H1 (cell line): ENCODE measurements at regions of chr9 and their contacts with region 1.

Region 1: GRCh38 chr9:133715866-133716563 is 22.1 kb downstream of the SARDH start:
- DNase-seq: peak in 1 of 2 experiments; percentile 80
- H3K4me3 ChIP-seq: no peak overlapping the region
- H3K27ac ChIP-seq: no peak overlapping the region
- H3K4me1 ChIP-seq: peaks cover 0 to 9% (median 3%) of the 10 kb centered on the region in 4 experiments; a peak in 3 of 7 replicates
- H3K27me3 ChIP-seq: no peaks in the 10 kb centered on the region
- CTCF ChIP-seq: peak in 2 of 3 experiments; percentile 73 to 86; a peak in 2 of 4 replicates
- EP300 ChIP-seq: no peak
- POLR2A ChIP-seq: no peak
- RAD21 ChIP-seq: peak; percentile 84 to 87

Region 2: GRCh38 chr9:133581513-133582343 is 134.3 kb before region 1 on chr9:
- CTCF ChIA-PET with region 1: interaction called, 12 read pairs
- POLR2A ChIA-PET with region 1: no interaction called
- DNase-seq: no peak
- H3K4me3 ChIP-seq: no peak overlapping the region
- H3K27ac ChIP-seq: no peak overlapping the region
- H3K4me1 ChIP-seq: peaks cover 3 to 26% (median 21%) of the 10 kb centered on the region in 4 experiments
- H3K27me3 ChIP-seq: no peaks in the 10 kb centered on the region
- CTCF ChIP-seq: no peak
- EP300 ChIP-seq: no peak
- POLR2A ChIP-seq: no peak
- RAD21 ChIP-seq: no peak

Region 3: DNA sequence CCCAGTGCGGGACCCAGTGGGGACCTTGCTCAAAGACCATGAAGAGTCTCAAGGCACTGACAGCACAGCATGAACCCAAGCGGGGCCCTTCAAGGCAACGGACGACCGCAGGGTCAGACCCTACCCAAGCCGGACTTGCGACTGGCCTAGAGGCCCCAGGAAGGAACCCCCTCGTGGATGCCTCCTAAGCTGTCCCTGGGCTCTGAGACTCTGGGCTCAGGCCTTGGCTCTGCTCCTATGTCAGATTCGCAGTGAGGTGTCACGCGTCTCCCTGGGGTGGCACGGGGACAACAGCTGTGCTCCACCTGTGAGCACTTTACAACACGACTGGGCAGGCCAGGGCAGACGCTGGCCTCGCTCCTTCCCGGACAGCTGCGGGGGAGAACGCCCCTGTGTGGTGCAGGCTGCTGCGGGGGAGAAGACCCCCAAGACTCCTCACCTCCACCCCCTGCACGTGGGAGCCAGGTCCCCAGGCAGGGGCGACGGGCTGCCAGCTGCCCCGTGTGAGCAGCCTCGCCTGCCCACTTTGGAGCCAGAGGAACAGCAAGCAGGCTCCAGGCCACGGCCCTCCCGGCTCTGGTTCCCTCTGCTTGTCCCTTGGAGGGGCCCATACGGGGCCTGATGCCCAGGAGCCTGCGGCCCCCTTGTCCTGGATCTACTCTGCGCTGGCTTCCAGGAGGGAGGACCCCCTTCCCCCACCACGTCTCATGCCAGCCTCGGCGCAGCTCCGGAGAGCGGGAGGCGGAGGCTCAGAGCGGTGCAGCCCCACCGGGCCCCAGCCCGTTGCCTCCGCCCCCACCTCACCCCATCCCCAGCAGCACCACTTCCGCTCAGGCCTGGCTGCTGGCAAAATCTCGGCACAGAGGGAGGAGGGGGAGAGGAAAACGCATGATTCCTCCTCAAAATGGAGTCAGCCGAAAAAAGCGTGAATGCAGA is 13.9 kb before region 1 on chr9:
- CTCF ChIA-PET with region 1: interaction called, 11 read pairs
- POLR2A ChIA-PET with region 1: no interaction called
- DNase-seq: no peak
- H3K4me3 ChIP-seq: no peak overlapping the region
- H3K27ac ChIP-seq: no peak overlapping the region
- H3K4me1 ChIP-seq: peaks cover 0 to 13% (median 10%) of the 10 kb centered on the region in 4 experiments; a peak in 5 of 7 replicates
- H3K27me3 ChIP-seq: no peaks in the 10 kb centered on the region; a peak in 2 of 7 replicates
- CTCF ChIP-seq: no peak
- EP300 ChIP-seq: no peak
- POLR2A ChIP-seq: no peak
- RAD21 ChIP-seq: no peak

Region 4: GRCh38 chr9:133759146-133759900 is 43.3 kb after region 1 on chr9:
- CTCF ChIA-PET with region 1: no interaction called
- POLR2A ChIA-PET with region 1: no interaction called
- DNase-seq: peak in 1 of 2 experiments; percentile 63
- H3K4me3 ChIP-seq: no peak overlapping the region
- H3K27ac ChIP-seq: no peak overlapping the region
- H3K4me1 ChIP-seq: no peaks in the 10 kb centered on the region; a peak in 1 of 7 replicates
- H3K27me3 ChIP-seq: no peaks in the 10 kb centered on the region; a peak in 1 of 7 replicates
- CTCF ChIP-seq: no peak
- EP300 ChIP-seq: no peak
- POLR2A ChIP-seq: no peak
- RAD21 ChIP-seq: no peak